ENCODE measurements at regions of chr17 and their contacts with region 1.

Region 1: DNA sequence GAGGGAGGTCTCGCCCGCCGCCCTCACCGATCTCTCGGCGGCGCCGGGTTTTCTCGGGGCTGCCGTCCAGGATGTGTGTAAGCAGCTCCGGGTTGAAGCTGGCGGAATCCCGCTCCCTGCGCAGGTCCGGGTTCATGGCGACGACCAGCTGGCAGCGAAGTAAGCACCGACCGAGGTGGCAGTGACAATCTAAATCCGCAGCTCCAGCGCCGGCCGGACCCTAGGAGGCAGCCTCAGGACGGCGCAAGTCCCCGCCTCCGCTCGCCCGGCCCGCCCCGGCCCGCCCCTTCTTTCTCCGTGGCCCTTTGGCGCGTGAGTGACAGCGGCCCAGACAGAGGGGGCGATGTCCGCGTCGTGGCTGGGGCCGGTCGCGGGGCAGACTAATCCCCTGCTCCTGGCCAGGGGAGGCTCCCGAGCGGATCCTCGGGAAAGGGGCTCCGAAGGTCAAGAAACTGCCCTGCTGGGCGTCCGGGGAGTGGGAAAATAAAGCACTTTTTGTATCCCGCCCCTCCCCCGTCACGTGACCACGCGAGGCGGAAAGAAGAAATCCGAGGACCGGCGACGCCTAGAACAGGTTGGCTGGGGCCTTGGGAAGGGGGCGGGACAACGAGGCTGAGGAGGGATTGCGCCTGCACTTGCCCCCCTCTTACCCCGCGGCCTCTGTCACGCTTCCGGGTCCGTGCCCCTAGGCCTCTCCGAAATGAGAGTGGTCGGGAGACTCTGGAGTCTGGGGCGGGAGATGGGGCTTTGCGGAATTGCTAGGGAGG is at the starts of genes ACOX1 and TEN1:
- DNase-seq: peak; percentile 84 to 96 (median 93)
- ATAC-seq: peak; percentile 95
- H3K4me3 ChIP-seq: peak within 1 kb of the TSS; percentile 89
- H3K4me3 Mint-ChIP-seq: peak within 1 kb of the TSS; percentile 91 to 99 (median 98)
- H3K27ac ChIP-seq: peak within 1 kb of the TSS; percentile 100
- H3K27ac Mint-ChIP-seq: peak within 1 kb of the TSS; percentile 98 to 100 (median 100)
- H3K4me1 ChIP-seq: peaks cover 5 to 6% of the 10 kb centered on the region in 2 donors
- H3K4me1 Mint-ChIP-seq: peaks cover 26 to 53% (median 47%) of the 10 kb centered on the region in 7 donors
- H3K27me3 ChIP-seq: no peaks in the 10 kb centered on the region
- H3K27me3 Mint-ChIP-seq: no peaks in the 10 kb centered on the region
- total RNA-seq, gene ACOX1: 22.8 to 35.0 (median 33.5) TPM
- total RNA-seq, gene TEN1: 13.1 to 20.1 (median 13.8) TPM

Region 2: DNA sequence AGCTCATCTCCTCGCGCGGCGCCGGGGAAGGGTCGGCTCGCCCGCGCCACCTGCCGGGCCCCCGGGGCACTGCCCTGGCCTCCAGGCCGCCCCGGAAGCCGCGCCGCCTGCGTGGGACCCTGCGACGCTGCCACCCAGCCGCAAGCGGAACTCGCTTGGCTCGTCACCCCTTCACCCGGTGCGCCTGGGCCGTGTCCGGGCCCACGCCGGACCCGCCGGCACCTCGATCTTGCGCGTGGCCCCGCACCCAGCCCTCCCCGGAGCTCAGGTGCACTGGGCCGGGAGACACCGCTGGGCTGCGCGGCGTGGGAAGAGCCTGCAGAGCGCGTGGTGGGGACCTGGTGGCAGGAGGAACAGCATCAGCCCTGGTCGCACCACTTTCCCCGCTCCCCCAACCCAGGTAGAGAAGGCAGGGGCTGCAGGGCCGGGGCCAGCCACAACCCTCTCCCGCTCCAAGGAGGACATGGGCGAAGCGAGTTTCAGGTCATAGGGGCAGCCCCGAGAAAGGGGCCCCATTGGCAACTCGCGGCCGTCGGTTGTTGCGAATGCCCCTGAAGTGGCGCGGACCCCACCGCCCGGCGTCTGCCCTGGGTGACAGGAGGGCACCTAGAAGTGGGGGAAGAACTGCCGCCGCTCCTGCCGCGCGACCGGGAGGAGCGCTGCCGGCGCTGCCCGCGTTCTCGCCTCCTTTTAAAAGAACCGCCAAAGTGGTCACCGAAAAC is 707.7 kb before region 1 on chr17:
- CTCF ChIA-PET with region 1: no interaction called
- POLR2A ChIA-PET with region 1: no interaction called
- intact Hi-C with region 1: loop called in 1 of 2 experiments (anchors 10 kb)
- DNase-seq: peak; percentile 80 to 96 (median 90)
- ATAC-seq: peak; percentile 96
- H3K4me3 ChIP-seq: peak overlapping the region; percentile 75
- H3K4me3 Mint-ChIP-seq: peak overlapping the region; percentile 67 to 87 (median 84)
- H3K27ac ChIP-seq: peak overlapping the region; percentile 84
- H3K27ac Mint-ChIP-seq: peak overlapping the region; percentile 57 to 90 (median 85)
- H3K4me1 ChIP-seq: peaks cover 15 to 24% of the 10 kb centered on the region in 2 donors
- H3K4me1 Mint-ChIP-seq: peaks cover 5 to 41% (median 34%) of the 10 kb centered on the region in 7 donors
- H3K27me3 ChIP-seq: no peaks in the 10 kb centered on the region
- H3K27me3 Mint-ChIP-seq: no peaks in the 10 kb centered on the region

Region 3: GRCh38 chr17:75764711-75765421 is 214.3 kb before region 1 on chr17 and contains the start of gene GALK1:
- CTCF ChIA-PET with region 1: no interaction called
- POLR2A ChIA-PET with region 1: no interaction called
- intact Hi-C with region 1: no loop called
- DNase-seq: peak; percentile 56 to 78 (median 67)
- ATAC-seq: peak; percentile 97
- H3K4me3 ChIP-seq: peak within 1 kb of the TSS; percentile 71
- H3K4me3 Mint-ChIP-seq: peak within 1 kb of the TSS; percentile 62 to 84 (median 75)
- H3K27ac ChIP-seq: peak within 1 kb of the TSS; percentile 67
- H3K27ac Mint-ChIP-seq: peak within 1 kb of the TSS; percentile 32 to 87 (median 70)
- H3K4me1 ChIP-seq: peaks cover 11% of the 10 kb centered on the region in 2 donors
- H3K4me1 Mint-ChIP-seq: peaks cover 0 to 21% (median 10%) of the 10 kb centered on the region in 7 donors
- H3K27me3 ChIP-seq: no peaks in the 10 kb centered on the region
- H3K27me3 Mint-ChIP-seq: no peaks in the 10 kb centered on the region
- total RNA-seq, gene GALK1: 9.9 to 42.9 (median 22.1) TPM

Region 4: DNA sequence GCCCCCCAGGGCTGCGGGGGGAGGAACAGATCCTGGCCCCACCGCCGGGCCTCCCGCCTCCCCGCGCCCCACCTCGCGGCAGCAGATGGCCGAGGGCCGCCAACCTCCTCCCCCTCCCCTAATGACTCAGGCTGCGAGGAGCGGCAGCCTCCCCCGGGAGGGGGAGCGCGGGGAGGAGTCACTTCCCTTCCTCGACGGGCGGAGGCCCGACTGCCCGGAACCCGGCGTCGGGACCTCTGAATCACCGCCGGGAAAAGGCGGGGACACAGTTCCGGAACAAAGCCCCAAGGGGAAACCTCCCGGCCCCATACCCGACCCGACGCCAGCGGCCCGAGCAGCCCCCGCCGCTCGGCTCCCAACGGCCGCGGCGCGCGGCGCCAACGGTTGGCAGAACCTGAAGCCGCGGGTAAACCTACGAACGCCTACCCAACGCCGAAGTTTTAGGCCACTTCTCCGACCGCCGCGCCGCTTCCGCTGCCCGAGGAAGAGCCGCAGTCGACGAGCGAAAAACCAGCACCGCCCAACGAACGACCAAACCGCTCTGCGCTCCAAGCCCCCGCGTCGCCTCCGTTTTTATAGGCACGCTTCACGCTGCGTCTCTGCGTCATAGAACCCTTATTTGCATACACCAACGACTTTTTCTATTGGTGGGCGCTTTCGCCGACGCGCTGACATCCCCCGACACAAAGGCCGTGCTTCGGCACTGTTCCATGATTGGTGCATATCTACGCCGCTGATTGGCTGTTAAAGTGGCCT is 199.7 kb before region 1 on chr17:
- CTCF ChIA-PET with region 1: no interaction called
- POLR2A ChIA-PET with region 1: interaction called, 4 read pairs
- intact Hi-C with region 1: loop called (anchors 1 kb)
- DNase-seq: peak; percentile 84 to 99 (median 96)
- ATAC-seq: peak; percentile 79
- H3K4me3 ChIP-seq: peak overlapping the region; percentile 85
- H3K4me3 Mint-ChIP-seq: peak overlapping the region; percentile 83 to 100 (median 98)
- H3K27ac ChIP-seq: peak overlapping the region; percentile 98
- H3K27ac Mint-ChIP-seq: peak overlapping the region; percentile 89 to 100 (median 99)
- H3K4me1 ChIP-seq: peaks cover 31 to 35% of the 10 kb centered on the region in 2 donors
- H3K4me1 Mint-ChIP-seq: peaks cover 19 to 68% (median 56%) of the 10 kb centered on the region in 7 donors
- H3K27me3 ChIP-seq: no peaks in the 10 kb centered on the region
- H3K27me3 Mint-ChIP-seq: peaks cover 0 to 3% (median 0%) of the 10 kb centered on the region in 5 donors

Region 5: GRCh38 chr17:75869282-75870141 is 109.6 kb before region 1 on chr17:
- CTCF ChIA-PET with region 1: no interaction called
- POLR2A ChIA-PET with region 1: no interaction called
- intact Hi-C with region 1: no loop called
- DNase-seq: no peak
- ATAC-seq: no peak
- H3K4me3 ChIP-seq: no peak overlapping the region
- H3K4me3 Mint-ChIP-seq: no peak overlapping the region
- H3K27ac ChIP-seq: no peak overlapping the region
- H3K27ac Mint-ChIP-seq: peak overlapping the region in 1 of 9 donors; percentile 52
- H3K4me1 ChIP-seq: peaks cover 13 to 18% of the 10 kb centered on the region in 2 donors
- H3K4me1 Mint-ChIP-seq: peaks cover 8 to 41% (median 26%) of the 10 kb centered on the region in 7 donors
- H3K27me3 ChIP-seq: no peaks in the 10 kb centered on the region
- H3K27me3 Mint-ChIP-seq: no peaks in the 10 kb centered on the region

Region 6: GRCh38 chr17:75896415-75897159 is 82.5 kb before region 1 on chr17 and contains the start of gene TRIM65:
- CTCF ChIA-PET with region 1: no interaction called
- POLR2A ChIA-PET with region 1: interaction called, 5 read pairs
- intact Hi-C with region 1: loop called in 1 of 2 experiments (anchors 1 kb)
- DNase-seq: peak; percentile 63 to 87 (median 71)
- ATAC-seq: peak; percentile 91
- H3K4me3 ChIP-seq: peak within 1 kb of the TSS; percentile 65
- H3K4me3 Mint-ChIP-seq: peak within 1 kb of the TSS; percentile 55 to 92 (median 84)
- H3K27ac ChIP-seq: peak within 1 kb of the TSS; percentile 75
- H3K27ac Mint-ChIP-seq: peak within 1 kb of the TSS; percentile 66 to 91 (median 85)
- H3K4me1 ChIP-seq: peaks cover 8 to 12% of the 10 kb centered on the region in 2 donors
- H3K4me1 Mint-ChIP-seq: peaks cover 22 to 32% (median 26%) of the 10 kb centered on the region in 7 donors
- H3K27me3 ChIP-seq: no peaks in the 10 kb centered on the region
- H3K27me3 Mint-ChIP-seq: no peaks in the 10 kb centered on the region
- total RNA-seq, gene TRIM65: 20.9 to 37.7 (median 29.6) TPM

Region 7: GRCh38 chr17:75940724-75941441 is 38.2 kb before region 1 on chr17 and contains the start of gene FBF1:
- CTCF ChIA-PET with region 1: interaction called, 3 read pairs
- POLR2A ChIA-PET with region 1: interaction called, 7 read pairs
- intact Hi-C with region 1: loop called (anchors 1 kb)
- DNase-seq: peak; percentile 74 to 92 (median 82)
- ATAC-seq: peak; percentile 100
- H3K4me3 ChIP-seq: peak within 1 kb of the TSS; percentile 89
- H3K4me3 Mint-ChIP-seq: peak within 1 kb of the TSS; percentile 77 to 93 (median 90)
- H3K27ac ChIP-seq: peak within 1 kb of the TSS; percentile 86
- H3K27ac Mint-ChIP-seq: peak within 1 kb of the TSS; percentile 74 to 94 (median 89)
- H3K4me1 ChIP-seq: peaks cover 5 to 11% of the 10 kb centered on the region in 2 donors
- H3K4me1 Mint-ChIP-seq: peaks cover 9 to 19% (median 11%) of the 10 kb centered on the region in 7 donors
- H3K27me3 ChIP-seq: no peaks in the 10 kb centered on the region
- H3K27me3 Mint-ChIP-seq: no peaks in the 10 kb centered on the region
- total RNA-seq, gene FBF1: 19.9 to 48.1 (median 29.0) TPM

Region 8: DNA sequence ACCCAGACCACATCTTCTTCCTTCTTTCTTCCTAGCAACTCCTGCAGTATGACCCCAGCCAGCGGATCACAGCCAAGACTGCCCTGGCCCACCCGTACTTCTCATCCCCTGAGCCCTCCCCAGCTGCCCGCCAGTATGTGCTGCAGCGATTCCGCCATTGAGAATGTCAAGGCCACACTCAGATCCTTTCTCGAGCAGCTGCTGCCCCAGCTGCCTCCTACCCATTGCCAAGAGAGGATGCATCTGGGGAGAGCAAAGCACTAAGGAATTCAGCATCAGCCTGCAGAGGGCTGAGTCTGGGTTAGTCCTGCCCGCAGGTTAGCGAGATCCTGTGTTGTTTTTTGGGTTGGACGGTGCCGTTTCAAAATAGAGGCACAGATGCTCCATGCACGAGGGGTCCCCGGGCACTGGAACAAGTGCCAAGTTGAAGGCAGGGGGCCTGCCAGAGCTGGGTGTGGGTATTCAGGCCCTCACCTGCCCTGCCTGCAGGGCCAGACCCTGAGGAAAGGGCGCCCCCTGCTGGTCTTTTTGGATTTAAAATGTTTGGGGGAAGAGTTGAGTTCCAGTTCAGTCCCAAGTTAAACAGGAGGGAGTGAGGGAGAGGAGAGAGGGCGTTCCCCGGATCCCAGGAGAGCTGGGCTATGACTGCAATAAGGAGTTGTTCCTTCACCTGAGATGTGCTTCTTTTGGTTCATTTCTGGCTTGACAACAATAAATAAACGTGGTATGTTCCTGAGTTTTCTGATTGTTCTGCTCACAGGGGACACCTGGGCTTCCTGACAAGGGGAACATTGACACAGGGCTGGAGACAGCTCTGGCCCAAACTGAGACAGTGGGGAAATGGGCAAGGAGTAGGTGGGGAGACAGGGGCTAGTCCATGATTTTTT is 26.4 kb after region 1 on chr17:
- CTCF ChIA-PET with region 1: interaction called, 4 read pairs
- POLR2A ChIA-PET with region 1: interaction called, 7 read pairs
- intact Hi-C with region 1: loop called in 1 of 2 experiments (anchors 1 kb)
- DNase-seq: peak; percentile 57 to 87 (median 73)
- ATAC-seq: peak; percentile 77
- H3K4me3 ChIP-seq: no peak overlapping the region
- H3K4me3 Mint-ChIP-seq: no peak overlapping the region
- H3K27ac ChIP-seq: no peak overlapping the region
- H3K27ac Mint-ChIP-seq: peak overlapping the region in 3 of 9 donors; percentile 47 to 65 (median 55)
- H3K4me1 ChIP-seq: no peaks in the 10 kb centered on the region
- H3K4me1 Mint-ChIP-seq: peaks cover 0 to 7% (median 4%) of the 10 kb centered on the region in 7 donors
- H3K27me3 ChIP-seq: no peaks in the 10 kb centered on the region
- H3K27me3 Mint-ChIP-seq: no peaks in the 10 kb centered on the region

Region 9: GRCh38 chr17:76039121-76039520 is 60.0 kb after region 1 on chr17:
- CTCF ChIA-PET with region 1: no interaction called
- POLR2A ChIA-PET with region 1: no interaction called
- intact Hi-C with region 1: no loop called
- DNase-seq: no peak
- ATAC-seq: no peak
- H3K4me3 ChIP-seq: no peak overlapping the region
- H3K4me3 Mint-ChIP-seq: no peak overlapping the region
- H3K27ac ChIP-seq: no peak overlapping the region
- H3K27ac Mint-ChIP-seq: peak overlapping the region in 4 of 9 donors; percentile 6 to 64 (median 44)
- H3K4me1 ChIP-seq: no peaks in the 10 kb centered on the region
- H3K4me1 Mint-ChIP-seq: peaks cover 0 to 17% (median 7%) of the 10 kb centered on the region in 7 donors
- H3K27me3 ChIP-seq: no peaks in the 10 kb centered on the region
- H3K27me3 Mint-ChIP-seq: no peaks in the 10 kb centered on the region

Region 10: DNA sequence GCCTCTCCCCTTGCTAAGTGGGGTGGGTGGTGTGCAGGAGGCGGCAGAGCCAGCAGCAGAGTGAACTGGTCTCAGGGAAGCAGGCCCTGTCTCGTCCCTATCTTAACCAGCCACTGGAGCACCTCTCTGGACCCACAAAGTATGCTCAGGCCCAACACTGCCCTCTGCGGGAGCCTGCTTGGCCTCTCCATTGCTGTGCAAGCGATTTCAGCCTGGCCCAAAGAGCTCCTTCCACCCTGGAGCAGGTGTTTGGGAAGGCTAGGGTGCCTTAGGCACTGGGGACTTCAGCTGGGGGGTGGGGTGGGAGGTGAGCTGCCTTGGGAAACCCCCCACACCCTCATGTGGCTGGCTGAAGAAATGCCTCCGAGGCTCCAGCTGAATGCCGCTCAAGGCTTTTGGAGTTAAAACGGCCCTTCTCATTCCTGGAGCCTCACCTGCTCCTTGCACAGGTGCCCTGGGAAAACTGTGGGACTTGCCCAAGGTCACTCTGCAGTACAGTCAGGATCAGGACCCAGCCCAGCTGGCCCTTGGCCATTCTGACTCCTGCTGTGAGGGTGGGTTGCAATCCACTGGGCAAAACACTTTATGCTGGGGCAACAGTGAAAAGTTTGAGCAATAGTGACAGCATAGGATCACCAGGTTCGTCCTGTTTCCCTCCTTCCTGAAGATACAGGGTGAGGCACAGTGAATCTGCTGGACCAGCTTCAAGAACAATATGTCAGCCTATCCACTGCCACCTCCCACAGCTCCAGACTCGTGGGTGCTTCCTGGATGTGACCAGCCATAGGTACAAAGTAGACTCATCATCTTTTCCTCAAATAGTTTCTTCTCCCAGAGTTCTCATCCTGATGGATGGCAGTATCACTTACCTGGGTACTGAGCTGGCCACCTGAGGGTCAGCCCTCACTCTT is 479.7 kb after region 1 on chr17:
- CTCF ChIA-PET with region 1: no interaction called
- POLR2A ChIA-PET with region 1: no interaction called
- intact Hi-C with region 1: no loop called
- DNase-seq: no peak
- ATAC-seq: peak; percentile 24
- H3K4me3 ChIP-seq: no peak overlapping the region
- H3K4me3 Mint-ChIP-seq: no peak overlapping the region
- H3K27ac ChIP-seq: no peak overlapping the region
- H3K27ac Mint-ChIP-seq: peak overlapping the region in 1 of 9 donors; percentile 9
- H3K4me1 ChIP-seq: no peaks in the 10 kb centered on the region
- H3K4me1 Mint-ChIP-seq: peaks cover 0 to 2% (median 0%) of the 10 kb centered on the region in 7 donors
- H3K27me3 ChIP-seq: no peaks in the 10 kb centered on the region
- H3K27me3 Mint-ChIP-seq: peaks cover 0 to 8% (median 0%) of the 10 kb centered on the region in 5 donors